CD4-positive, alpha-beta T cell (primary cell): ENCODE measurements at regions of chr2 and their contacts with region 1.

Region 1: DNA sequence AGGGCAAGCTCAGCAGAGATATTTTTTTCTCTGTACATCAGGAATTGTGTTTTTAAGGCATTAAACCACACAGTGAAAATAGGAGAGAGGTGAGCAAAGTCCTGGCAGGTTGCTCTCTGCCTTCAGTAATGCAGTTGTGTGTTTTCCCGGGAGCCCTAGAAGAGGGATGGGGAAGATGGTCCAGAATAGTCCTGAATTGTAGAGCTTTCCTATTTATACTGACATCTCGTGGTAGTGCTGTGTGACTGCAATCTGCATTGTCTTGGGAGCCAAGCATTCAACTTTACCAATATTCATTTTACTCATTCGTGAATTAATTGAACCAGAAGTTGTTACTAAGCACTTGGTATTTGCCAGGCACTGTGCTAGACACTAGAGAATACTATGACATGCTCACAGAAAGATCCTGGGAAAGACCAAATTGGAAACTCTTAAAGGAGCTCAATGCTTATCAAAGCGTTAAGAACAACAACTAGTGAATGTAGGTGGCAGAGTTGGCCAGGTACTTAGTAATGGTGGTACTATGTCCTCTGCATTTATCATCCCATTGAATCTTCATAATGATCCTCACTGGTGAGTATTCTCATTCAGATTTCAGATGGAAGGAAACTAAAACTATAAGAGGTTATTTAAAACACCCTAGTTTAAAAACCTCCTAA is 214.6 kb downstream of the TRIB2 start:
- DNase-seq: peak in 4 of 14 experiments; percentile 23 to 44 (median 38)
- ATAC-seq: no peak
- H3K4me3 ChIP-seq: no peak overlapping the region
- H3K4me3 Mint-ChIP-seq: no peak overlapping the region
- H3K27ac ChIP-seq: no peak overlapping the region
- H3K27ac Mint-ChIP-seq: no peak overlapping the region
- H3K4me1 ChIP-seq: no peaks in the 10 kb centered on the region
- H3K4me1 Mint-ChIP-seq: peaks cover 20% of the 10 kb centered on the region
- H3K27me3 ChIP-seq: no peaks in the 10 kb centered on the region
- H3K27me3 Mint-ChIP-seq: peaks cover 5% of the 10 kb centered on the region
- CTCF ChIP-seq: peak; percentile 93

Region 2: GRCh38 chr2:11829947-11830707 is 1101.2 kb before region 1 on chr2:
- CTCF ChIA-PET with region 1: interaction called, 3 read pairs
- POLR2A ChIA-PET with region 1: interaction called, 3 read pairs
- intact Hi-C with region 1: loop called (anchors 1 kb)
- DNase-seq: peak; percentile 4 to 85 (median 32)
- ATAC-seq: peak; percentile 77
- H3K4me3 ChIP-seq: peak overlapping the region; percentile 42
- H3K4me3 Mint-ChIP-seq: peak overlapping the region; percentile 82
- H3K27ac ChIP-seq: peak overlapping the region in 1 of 2 donors; percentile 6
- H3K27ac Mint-ChIP-seq: peak overlapping the region; percentile 34
- H3K4me1 ChIP-seq: peaks cover 20% of the 10 kb centered on the region
- H3K4me1 Mint-ChIP-seq: peaks cover 37% of the 10 kb centered on the region
- H3K27me3 ChIP-seq: no peaks in the 10 kb centered on the region
- H3K27me3 Mint-ChIP-seq: no peaks in the 10 kb centered on the region
- CTCF ChIP-seq: no peak

Region 3: DNA sequence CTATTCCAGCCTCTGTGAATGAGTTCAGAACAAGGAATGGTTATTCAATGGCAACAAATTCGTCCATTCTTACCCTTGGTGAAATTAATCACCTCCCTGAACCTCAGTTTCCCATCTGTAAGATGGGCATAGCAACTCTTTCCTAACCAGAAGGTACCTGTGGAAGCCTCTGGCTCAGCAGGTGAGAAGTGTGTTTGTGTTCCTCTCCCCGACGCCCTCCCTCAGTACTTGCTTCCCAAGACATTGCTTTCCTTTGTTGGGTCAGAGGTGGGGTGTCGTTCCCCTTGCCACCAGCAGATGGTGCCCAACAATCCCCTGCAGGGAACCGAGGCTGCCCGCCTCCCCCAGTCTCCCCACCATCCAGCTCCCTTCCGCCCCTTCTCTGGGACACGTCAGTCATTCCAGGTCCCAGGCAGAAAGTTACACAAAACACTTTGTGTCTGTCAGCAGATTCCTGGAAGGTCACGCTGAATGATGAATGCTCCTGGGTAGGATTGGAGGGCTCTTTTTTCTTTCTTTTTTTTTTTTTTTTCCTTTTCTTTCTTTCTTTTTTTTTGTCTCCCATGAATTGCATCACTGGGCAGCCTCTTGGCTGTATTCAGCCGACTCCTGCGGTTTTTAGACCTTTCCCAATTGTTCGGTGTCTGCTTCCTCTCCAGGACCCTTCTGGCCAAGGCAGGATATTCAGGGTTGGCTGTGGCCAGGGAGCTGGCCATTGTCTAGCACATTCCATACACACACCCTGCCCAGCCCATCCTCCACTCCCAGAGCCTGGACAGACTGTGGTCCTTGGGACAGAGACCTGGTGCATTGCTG is 1067.6 kb before region 1 on chr2:
- CTCF ChIA-PET with region 1: interaction called, 4 read pairs
- POLR2A ChIA-PET with region 1: interaction called, 3 read pairs
- intact Hi-C with region 1: loop called (anchors 1 to 2 kb)
- DNase-seq: peak; percentile 50 to 86 (median 58)
- ATAC-seq: peak; percentile 83
- H3K4me3 ChIP-seq: peak overlapping the region; percentile 24
- H3K4me3 Mint-ChIP-seq: peak overlapping the region; percentile 18
- H3K27ac ChIP-seq: no peak overlapping the region
- H3K27ac Mint-ChIP-seq: no peak overlapping the region
- H3K4me1 ChIP-seq: peaks cover 15% of the 10 kb centered on the region
- H3K4me1 Mint-ChIP-seq: peaks cover 18% of the 10 kb centered on the region
- H3K27me3 ChIP-seq: no peaks in the 10 kb centered on the region
- H3K27me3 Mint-ChIP-seq: no peaks in the 10 kb centered on the region
- CTCF ChIP-seq: peak; percentile 97

Region 4: DNA sequence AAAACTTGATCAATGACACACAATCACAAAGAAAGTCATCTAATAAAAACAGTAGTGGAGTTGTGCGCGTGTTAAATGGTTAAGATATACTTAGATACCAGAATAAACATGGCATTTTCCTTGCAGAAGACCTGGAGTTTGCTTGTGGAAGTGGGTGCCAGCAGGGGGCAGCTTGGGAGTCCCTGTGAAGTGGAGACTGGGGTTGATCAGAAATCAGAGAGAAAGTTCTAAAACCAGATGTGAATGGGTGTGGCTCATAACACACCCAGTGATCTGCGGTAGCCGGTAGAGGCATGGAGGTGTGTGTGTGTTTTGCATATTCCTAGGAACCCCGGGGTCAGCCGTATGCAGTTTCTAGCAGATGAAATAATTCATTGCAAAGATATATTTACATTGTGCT is 514.7 kb before region 1 on chr2:
- CTCF ChIA-PET with region 1: interaction called, 5 read pairs
- POLR2A ChIA-PET with region 1: no interaction called
- intact Hi-C with region 1: loop called (anchors 2 to 5 kb)
- DNase-seq: peak; percentile 40 to 86 (median 65)
- ATAC-seq: peak; percentile 78
- H3K4me3 ChIP-seq: no peak overlapping the region
- H3K4me3 Mint-ChIP-seq: peak overlapping the region; percentile 5
- H3K27ac ChIP-seq: no peak overlapping the region
- H3K27ac Mint-ChIP-seq: peak overlapping the region; percentile 50
- H3K4me1 ChIP-seq: peaks cover 27% of the 10 kb centered on the region
- H3K4me1 Mint-ChIP-seq: peaks cover 64% of the 10 kb centered on the region
- H3K27me3 ChIP-seq: no peaks in the 10 kb centered on the region
- H3K27me3 Mint-ChIP-seq: no peaks in the 10 kb centered on the region
- CTCF ChIP-seq: peak; percentile 79

Region 5: DNA sequence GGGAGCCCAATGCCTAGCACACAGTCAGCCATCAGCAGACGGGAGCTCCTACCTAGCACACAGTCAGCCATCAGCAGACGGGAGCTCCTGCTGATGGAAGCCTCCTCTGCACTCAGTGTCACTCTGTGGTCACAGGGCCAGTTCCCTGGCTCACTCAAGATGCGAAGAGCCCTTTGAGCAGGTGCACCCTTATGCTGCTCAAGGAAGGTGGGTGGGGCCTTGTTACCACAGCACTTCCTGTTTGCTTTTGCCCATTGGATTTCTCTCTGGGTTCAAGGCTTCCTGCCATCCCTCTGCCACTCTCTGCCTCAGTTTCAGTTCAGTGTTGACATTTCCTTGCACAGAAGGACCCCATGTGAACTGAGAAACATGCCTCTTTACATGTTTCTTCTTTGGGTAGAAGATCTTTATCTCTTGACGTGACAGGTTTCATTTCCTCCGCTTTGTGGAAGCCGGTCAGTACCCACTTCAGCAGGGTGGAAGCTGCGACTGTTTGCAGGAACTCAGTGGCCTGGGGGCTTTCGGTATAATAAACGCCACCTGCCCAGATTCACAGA is 203.0 kb before region 1 on chr2:
- CTCF ChIA-PET with region 1: no interaction called
- POLR2A ChIA-PET with region 1: interaction called, 18 read pairs
- intact Hi-C with region 1: no loop called
- DNase-seq: peak; percentile 24 to 82 (median 55)
- ATAC-seq: peak; percentile 84
- H3K4me3 ChIP-seq: peak overlapping the region; percentile 31
- H3K4me3 Mint-ChIP-seq: peak overlapping the region; percentile 81
- H3K27ac ChIP-seq: peak overlapping the region; percentile 47 to 51
- H3K27ac Mint-ChIP-seq: peak overlapping the region; percentile 81
- H3K4me1 ChIP-seq: peaks cover 85% of the 10 kb centered on the region
- H3K4me1 Mint-ChIP-seq: peaks cover 99% of the 10 kb centered on the region
- H3K27me3 ChIP-seq: no peaks in the 10 kb centered on the region
- H3K27me3 Mint-ChIP-seq: no peaks in the 10 kb centered on the region
- CTCF ChIP-seq: no peak

Region 6: GRCh38 chr2:12856934-12857601 is 74.2 kb before region 1 on chr2:
- CTCF ChIA-PET with region 1: interaction called, 3 read pairs
- POLR2A ChIA-PET with region 1: no interaction called
- intact Hi-C with region 1: loop called in 1 of 2 experiments (anchors 5 kb)
- DNase-seq: peak in 11 of 14 experiments; percentile 3 to 87 (median 22)
- ATAC-seq: peak; percentile 88
- H3K4me3 ChIP-seq: no peak overlapping the region
- H3K4me3 Mint-ChIP-seq: no peak overlapping the region
- H3K27ac ChIP-seq: no peak overlapping the region
- H3K27ac Mint-ChIP-seq: no peak overlapping the region
- H3K4me1 ChIP-seq: peaks cover 52% of the 10 kb centered on the region
- H3K4me1 Mint-ChIP-seq: peaks cover 12% of the 10 kb centered on the region
- H3K27me3 ChIP-seq: no peaks in the 10 kb centered on the region
- H3K27me3 Mint-ChIP-seq: no peaks in the 10 kb centered on the region
- CTCF ChIP-seq: no peak